Left ventricle myocardium superior (tissue), 1 donor: ENCODE measurements at regions of chr19 and their contacts with region 1.

Region 1: DNA sequence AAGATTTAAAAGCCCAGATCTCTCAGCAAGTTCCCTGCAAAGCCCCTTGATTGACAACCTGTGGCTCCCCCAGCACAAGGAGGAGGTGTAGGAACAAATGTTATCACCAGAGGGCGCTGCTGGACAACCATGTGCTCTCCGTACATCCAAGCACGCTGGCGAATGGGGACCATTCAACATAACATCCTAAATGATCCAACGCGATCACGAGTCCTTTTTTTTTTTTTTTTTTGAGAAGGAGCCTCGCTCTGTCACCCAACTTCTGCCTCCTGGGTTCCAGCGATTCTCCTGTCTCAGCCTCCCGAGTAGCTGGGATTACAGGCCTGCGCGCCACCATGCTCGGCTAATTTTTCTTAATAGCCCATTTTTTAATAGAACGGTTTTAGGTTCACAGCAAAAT is 52.0 kb downstream of the NWD1 start:
- DNase-seq: peak; percentile 73
- ATAC-seq: peak; percentile 87

Region 2: GRCh38 chr19:17052439-17053210 is 281.0 kb after region 1 on chr19:
- intact Hi-C with region 1: loop called (anchors 5 kb)
- DNase-seq: no peak
- ATAC-seq: peak; percentile 51